HepG2 (cell line): ENCODE measurements at regions of chr20 and their contacts with region 1.

Region 1: DNA sequence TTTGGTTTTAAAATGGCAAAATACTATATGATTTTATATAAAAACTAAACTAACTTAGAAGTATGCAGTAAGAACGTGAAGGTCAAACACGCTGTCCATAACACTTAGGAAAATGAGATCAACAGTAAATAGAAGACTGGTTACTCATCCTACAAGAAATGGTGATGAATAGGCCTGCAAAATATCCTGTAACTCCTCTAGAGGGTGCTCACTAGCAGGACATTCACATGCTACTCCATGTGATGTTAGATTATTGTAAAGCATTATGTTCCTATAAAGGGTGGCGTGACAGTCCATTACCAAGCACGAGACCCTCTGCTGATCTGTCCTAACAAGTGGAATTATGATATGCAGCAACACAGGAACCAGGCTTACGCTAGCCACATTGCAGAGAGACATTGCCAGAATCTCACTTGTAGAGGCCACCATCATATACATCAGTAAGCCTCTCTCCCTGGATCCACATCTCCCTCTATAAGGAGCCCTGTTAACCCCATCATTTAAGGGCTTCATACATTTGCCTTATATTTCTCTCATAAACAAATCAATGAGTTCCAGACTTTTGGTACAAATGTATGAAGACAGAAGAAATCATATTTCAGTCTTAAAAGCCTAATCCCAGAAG is 18.0 kb upstream of the DEFB129 start:
- DNase-seq: peak; percentile 64
- ATAC-seq: peak; percentile 92
- H3K4me3 ChIP-seq: no peak overlapping the region
- H3K27ac ChIP-seq: no peak overlapping the region
- H3K4me1 ChIP-seq: no peaks in the 10 kb centered on the region
- H3K27me3 ChIP-seq: peaks cover 1 to 27% of the 10 kb centered on the region in 2 experiments; a peak in 4 of 5 replicates
- CTCF ChIP-seq: peak; percentile 85
- EP300 ChIP-seq: no peak
- POLR2A ChIP-seq: no peak
- RAD21 ChIP-seq: peak; percentile 47

Region 2: DNA sequence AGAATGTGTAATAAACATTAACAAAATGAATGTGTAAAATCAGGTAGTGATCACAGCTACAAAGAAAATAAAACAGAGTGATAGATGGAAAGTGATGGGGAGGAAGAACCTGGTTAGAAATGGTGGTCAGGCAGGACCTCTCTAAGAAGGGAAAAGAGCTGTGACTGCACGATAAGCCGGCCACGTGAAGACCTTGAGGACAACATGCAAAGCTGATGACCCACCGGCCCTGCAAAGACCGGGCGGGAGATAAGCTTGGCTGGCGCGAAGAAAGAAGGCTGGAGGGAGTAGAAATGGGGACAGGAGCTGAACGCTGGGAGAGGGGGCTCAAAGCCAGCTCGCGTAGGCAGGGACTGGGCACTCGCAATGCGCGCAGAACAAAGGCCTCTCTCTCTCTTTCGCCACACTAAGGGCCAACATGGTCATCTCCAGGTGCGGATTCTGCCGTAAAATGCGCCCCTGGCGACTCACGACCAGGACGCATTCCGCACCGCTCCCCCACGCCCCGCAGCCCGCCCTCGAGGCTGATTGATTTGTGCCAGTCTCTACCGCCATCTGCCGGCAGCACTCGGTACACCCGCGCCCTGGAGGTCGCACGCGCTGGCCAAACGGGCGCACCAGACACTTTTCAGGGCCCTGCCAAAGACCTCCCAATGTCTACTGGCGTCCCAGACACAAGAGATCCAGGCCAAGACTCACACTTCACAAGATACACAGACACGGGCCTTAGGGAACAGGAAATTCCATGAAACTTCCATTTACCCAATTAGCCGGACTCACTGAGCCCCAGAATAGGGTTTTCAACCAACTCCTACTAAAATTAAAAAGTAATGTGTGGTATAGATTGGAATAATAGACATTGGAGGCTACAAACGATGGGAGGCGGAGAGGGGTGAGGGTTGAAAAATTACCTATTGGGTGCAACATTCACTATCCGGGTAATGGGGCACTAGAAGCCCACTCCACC is 57.8 kb after region 1 on chr20:
- CTCF ChIA-PET with region 1: interaction called, 19 read pairs
- POLR2A ChIA-PET with region 1: no interaction called
- in situ Hi-C with region 1: no loop called
- intact Hi-C with region 1: loop called (anchors 2 kb)
- DNase-seq: peak; percentile 92
- ATAC-seq: peak; percentile 89
- H3K4me3 ChIP-seq: peak overlapping the region; percentile 43 to 65 (median 44)
- H3K27ac ChIP-seq: no peak overlapping the region
- H3K4me1 ChIP-seq: peaks cover 9% of the 10 kb centered on the region
- H3K27me3 ChIP-seq: peaks cover 8 to 35% of the 10 kb centered on the region in 2 experiments; a peak in 4 of 5 replicates
- CTCF ChIP-seq: peak; percentile 100
- EP300 ChIP-seq: peak in 1 of 2 experiments; percentile 18; a peak in 1 of 4 replicates
- POLR2A ChIP-seq: peak; percentile 79 to 80
- RAD21 ChIP-seq: peak; percentile 99

Region 3: DNA sequence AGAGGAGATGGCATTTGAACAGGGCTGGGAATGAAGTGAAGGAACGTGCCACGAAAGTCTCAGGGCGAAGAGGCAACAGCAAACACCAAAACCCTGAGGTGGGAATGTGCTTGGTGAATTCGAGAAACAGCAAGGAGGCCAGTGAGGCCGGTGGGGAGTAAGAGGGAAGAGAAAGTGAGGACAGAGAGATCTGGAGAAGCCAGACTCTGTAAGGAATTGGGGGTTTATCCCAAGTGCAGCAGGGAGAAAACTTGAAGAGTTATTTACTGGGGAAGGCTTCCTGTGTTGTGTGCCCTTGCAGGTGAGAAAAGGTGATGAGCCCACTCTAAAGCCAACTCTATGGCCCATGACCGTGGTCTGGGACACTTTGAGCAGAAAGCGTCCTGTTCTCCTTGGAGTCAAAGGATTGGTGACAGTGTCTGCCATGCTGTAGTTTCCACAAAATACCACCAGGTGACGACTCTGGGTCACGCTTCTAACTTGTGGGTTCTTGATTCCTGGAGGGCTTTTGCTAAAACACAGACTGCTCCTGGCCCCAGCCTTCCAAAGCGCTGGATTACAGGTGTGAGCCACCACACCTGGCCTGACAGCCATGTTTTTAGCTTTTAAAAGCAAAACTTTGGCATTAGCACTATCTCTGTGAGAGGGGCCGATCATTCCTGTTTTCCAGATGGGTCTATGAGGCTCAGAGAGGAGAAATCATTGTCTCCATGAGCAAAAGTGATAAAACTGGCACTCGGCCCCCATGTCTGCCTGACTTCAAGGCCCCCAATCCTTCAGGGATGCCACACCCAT is 352.6 kb after region 1 on chr20:
- CTCF ChIA-PET with region 1: no interaction called
- POLR2A ChIA-PET with region 1: no interaction called
- in situ Hi-C with region 1: no loop called
- intact Hi-C with region 1: no loop called
- DNase-seq: peak; percentile 86
- ATAC-seq: peak; percentile 89
- H3K4me3 ChIP-seq: no peak overlapping the region
- H3K27ac ChIP-seq: no peak overlapping the region
- H3K4me1 ChIP-seq: no peaks in the 10 kb centered on the region
- H3K27me3 ChIP-seq: peaks cover 7 to 43% of the 10 kb centered on the region in 2 experiments; a peak in 3 of 5 replicates
- CTCF ChIP-seq: peak; percentile 99
- EP300 ChIP-seq: no peak
- POLR2A ChIP-seq: no peak
- RAD21 ChIP-seq: peak; percentile 98